Breast epithelium (tissue), 4 donors: ENCODE measurements at regions of chr7 and their contacts with region 1.

Region 1: DNA sequence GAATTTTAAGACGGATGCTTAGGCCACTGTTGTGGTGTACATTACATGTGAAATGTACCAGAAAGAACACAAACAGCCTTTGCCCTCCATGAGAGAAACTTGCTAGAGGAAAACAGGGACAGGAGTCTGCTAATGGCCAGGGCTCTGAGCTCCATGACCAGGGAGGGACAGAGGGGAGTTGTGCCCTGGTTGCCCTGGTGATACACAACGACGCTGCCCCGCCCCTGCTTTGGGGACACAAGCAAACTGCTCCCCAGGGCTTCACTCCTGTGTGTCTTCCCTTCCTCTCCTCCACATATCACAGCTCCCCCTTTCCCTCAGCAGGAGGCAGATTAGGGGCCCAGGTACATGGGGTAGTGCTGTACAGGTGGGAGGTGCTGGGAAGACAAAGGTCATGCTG is 36.2 kb downstream of the AMPH start:
- DNase-seq: no peak
- H3K4me3 ChIP-seq: no peak overlapping the region
- H3K27ac ChIP-seq: no peak overlapping the region
- H3K4me1 ChIP-seq: no peaks in the 10 kb centered on the region
- H3K27me3 ChIP-seq: no peaks in the 10 kb centered on the region
- CTCF ChIP-seq: no peak
- POLR2A ChIP-seq: no peak

Region 2: GRCh38 chr7:36600869-36601530 is 1993.9 kb before region 1 on chr7:
- intact Hi-C with region 1: no loop called
- DNase-seq: no peak
- H3K4me3 ChIP-seq: no peak overlapping the region
- H3K27ac ChIP-seq: no peak overlapping the region
- H3K4me1 ChIP-seq: no peaks in the 10 kb centered on the region
- H3K27me3 ChIP-seq: no peaks in the 10 kb centered on the region
- CTCF ChIP-seq: no peak
- POLR2A ChIP-seq: no peak

Region 3: GRCh38 chr7:39480901-39481300 is 886.0 kb after region 1 on chr7:
- intact Hi-C with region 1: loop called (anchors 5 kb)
- DNase-seq: no peak
- H3K4me3 ChIP-seq: no peak overlapping the region
- H3K27ac ChIP-seq: no peak overlapping the region
- H3K4me1 ChIP-seq: no peaks in the 10 kb centered on the region
- H3K27me3 ChIP-seq: no peaks in the 10 kb centered on the region
- CTCF ChIP-seq: no peak
- POLR2A ChIP-seq: no peak